ENCODE measurements at regions of chr11 and their contacts with region 1.

Region 1: DNA sequence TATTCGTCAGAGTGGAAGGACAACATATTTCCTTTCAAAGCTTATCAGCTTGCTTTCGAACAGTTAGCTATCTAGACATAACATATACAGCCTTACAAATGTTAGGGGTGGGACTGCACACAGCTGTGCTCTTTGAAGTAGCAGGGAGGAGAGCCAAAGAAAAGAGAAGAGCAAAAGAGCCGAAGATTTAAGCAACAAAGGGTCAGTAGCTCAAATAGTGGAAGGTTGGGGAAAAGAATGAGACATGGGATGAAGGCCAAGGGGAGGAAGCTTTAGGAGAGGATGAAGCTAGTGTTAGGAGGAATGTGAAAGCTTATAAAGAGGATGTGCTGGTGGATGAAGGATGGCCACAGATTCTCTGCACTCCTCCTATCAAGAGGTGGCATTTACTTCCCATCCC is 31.8 kb upstream of the IGSF22 start:
- DNase-seq: no peak
- ATAC-seq: no peak
- H3K4me3 ChIP-seq: no peak overlapping the region
- H3K4me3 Mint-ChIP-seq: no peak overlapping the region
- H3K27ac ChIP-seq: no peak overlapping the region
- H3K27ac Mint-ChIP-seq: no peak overlapping the region
- H3K4me1 ChIP-seq: no peaks in the 10 kb centered on the region
- H3K4me1 Mint-ChIP-seq: no peaks in the 10 kb centered on the region
- H3K27me3 ChIP-seq: no peaks in the 10 kb centered on the region
- H3K27me3 Mint-ChIP-seq: peaks cover 7% of the 10 kb centered on the region
- CTCF ChIP-seq: no peak

Region 2: DNA sequence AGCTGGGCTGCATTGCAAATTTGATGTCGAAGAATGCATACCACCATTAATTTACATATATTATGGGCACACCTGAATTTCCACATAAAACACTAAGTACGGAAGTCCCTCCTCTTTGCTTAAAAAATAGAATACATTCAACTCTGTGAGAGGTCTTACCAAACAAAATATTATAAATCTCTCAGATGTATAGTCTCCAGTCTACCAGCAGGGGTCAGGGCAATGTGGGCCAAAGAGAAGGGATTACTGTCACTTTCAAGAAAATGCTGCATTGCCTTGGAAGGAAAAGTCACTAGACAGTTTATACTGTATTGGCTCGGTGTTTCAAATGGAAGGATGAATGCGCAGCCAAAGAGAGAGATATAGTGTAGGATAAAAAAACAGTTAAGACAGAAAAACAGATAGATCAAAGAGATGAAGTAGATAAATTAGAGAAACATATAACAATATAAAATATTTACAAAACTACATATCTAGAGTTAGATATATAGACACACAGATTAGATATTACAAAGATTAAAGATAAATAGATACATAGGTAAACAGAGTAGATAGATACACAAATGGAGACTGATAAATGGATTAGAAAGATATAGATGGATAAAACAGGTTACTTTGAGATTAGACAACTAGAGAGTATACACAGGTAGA is 765.9 kb before region 1 on chr11:
- CTCF ChIA-PET with region 1: no interaction called
- POLR2A ChIA-PET with region 1: interaction called, 3 read pairs
- intact Hi-C with region 1: loop called in 1 of 2 experiments (anchors 2 kb)
- DNase-seq: peak in 8 of 9 experiments; percentile 20 to 67 (median 44)
- ATAC-seq: peak; percentile 81
- H3K4me3 ChIP-seq: no peak overlapping the region
- H3K4me3 Mint-ChIP-seq: no peak overlapping the region
- H3K27ac ChIP-seq: no peak overlapping the region
- H3K27ac Mint-ChIP-seq: no peak overlapping the region
- H3K4me1 ChIP-seq: no peaks in the 10 kb centered on the region
- H3K4me1 Mint-ChIP-seq: no peaks in the 10 kb centered on the region
- H3K27me3 ChIP-seq: no peaks in the 10 kb centered on the region
- H3K27me3 Mint-ChIP-seq: no peaks in the 10 kb centered on the region
- CTCF ChIP-seq: peak; percentile 96

Region 3: GRCh38 chr11:18243783-18244362 is 513.9 kb before region 1 on chr11:
- CTCF ChIA-PET with region 1: no interaction called
- POLR2A ChIA-PET with region 1: no interaction called
- intact Hi-C with region 1: loop called in 1 of 2 experiments (anchors 5 kb)
- DNase-seq: peak; percentile 14 to 81 (median 53)
- ATAC-seq: no peak
- H3K4me3 ChIP-seq: no peak overlapping the region
- H3K4me3 Mint-ChIP-seq: no peak overlapping the region
- H3K27ac ChIP-seq: no peak overlapping the region
- H3K27ac Mint-ChIP-seq: no peak overlapping the region
- H3K4me1 ChIP-seq: no peaks in the 10 kb centered on the region
- H3K4me1 Mint-ChIP-seq: peaks cover 6% of the 10 kb centered on the region
- H3K27me3 ChIP-seq: no peaks in the 10 kb centered on the region
- H3K27me3 Mint-ChIP-seq: peaks cover 13% of the 10 kb centered on the region
- CTCF ChIP-seq: peak; percentile 64

Region 4: GRCh38 chr11:18624161-18624560 is 133.7 kb before region 1 on chr11:
- CTCF ChIA-PET with region 1: no interaction called
- POLR2A ChIA-PET with region 1: no interaction called
- intact Hi-C with region 1: no loop called
- DNase-seq: no peak
- ATAC-seq: no peak
- H3K4me3 ChIP-seq: no peak overlapping the region
- H3K4me3 Mint-ChIP-seq: no peak overlapping the region
- H3K27ac ChIP-seq: no peak overlapping the region
- H3K27ac Mint-ChIP-seq: no peak overlapping the region
- H3K4me1 ChIP-seq: peaks cover 9% of the 10 kb centered on the region
- H3K4me1 Mint-ChIP-seq: peaks cover 46% of the 10 kb centered on the region
- H3K27me3 ChIP-seq: no peaks in the 10 kb centered on the region
- H3K27me3 Mint-ChIP-seq: no peaks in the 10 kb centered on the region
- CTCF ChIP-seq: no peak

Measured in CD8-positive, alpha-beta T cell (primary cell).